ENCODE measurements at regions of chr21 and their contacts with region 1.

Region 1: GRCh38 chr21:32753818-32754610 is 17.5 kb downstream of the PAXBP1 start:
- DNase-seq: no peak
- H3K4me3 ChIP-seq: no peak overlapping the region
- H3K27ac ChIP-seq: no peak overlapping the region
- H3K4me1 ChIP-seq: no peaks in the 10 kb centered on the region
- H3K27me3 ChIP-seq: no peaks in the 10 kb centered on the region
- CTCF ChIP-seq: no peak
- POLR2A ChIP-seq: no peak

Region 2: DNA sequence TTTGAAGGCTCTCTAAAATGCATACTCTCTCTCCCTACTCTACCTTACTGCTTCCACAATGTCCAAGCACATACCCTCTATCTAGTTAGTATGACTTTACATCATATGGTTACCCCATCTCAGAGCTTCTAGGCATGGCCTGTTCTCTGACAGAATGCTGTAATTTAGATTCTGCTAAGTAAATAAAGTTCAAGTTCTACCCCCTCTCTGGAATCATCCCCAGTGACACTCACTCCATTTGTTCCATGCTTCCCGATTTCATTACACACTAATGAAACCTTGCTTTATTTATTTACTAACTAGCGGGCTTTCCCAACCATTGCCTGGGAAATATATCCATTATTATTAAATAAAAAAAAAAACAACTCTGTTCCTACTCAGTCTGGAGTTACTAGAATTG is 880.2 kb after region 1 on chr21:
- intact Hi-C with region 1: loop called (anchors 5 kb)
- DNase-seq: no peak
- H3K4me3 ChIP-seq: no peak overlapping the region
- H3K27ac ChIP-seq: no peak overlapping the region
- H3K4me1 ChIP-seq: no peaks in the 10 kb centered on the region
- H3K27me3 ChIP-seq: no peaks in the 10 kb centered on the region
- CTCF ChIP-seq: no peak
- POLR2A ChIP-seq: no peak

Measured in breast epithelium (tissue), 4 donors.